IMR-90 (cell line): ENCODE measurements at regions of chr3 and their contacts with region 1.

Region 1: GRCh38 chr3:176814285-176814684 is 383.0 kb downstream of the TBL1XR1 start:
- DNase-seq: peak; percentile 43
- ATAC-seq: peak; percentile 100
- H3K4me3 ChIP-seq: no peak overlapping the region
- H3K27ac ChIP-seq: no peak overlapping the region
- H3K4me1 ChIP-seq: no peaks in the 10 kb centered on the region
- H3K27me3 ChIP-seq: no peaks in the 10 kb centered on the region
- CTCF ChIP-seq: peak; percentile 54
- POLR2A ChIP-seq: no peak
- RAD21 ChIP-seq: peak; percentile 42; the same call in 1 of the 2 replicates

Region 2: GRCh38 chr3:176514297-176514696 is 300.0 kb before region 1 on chr3:
- CTCF ChIA-PET with region 1: no interaction called
- POLR2A ChIA-PET with region 1: no interaction called
- dilution Hi-C with region 1: no loop called
- in situ Hi-C with region 1: no loop called
- intact Hi-C with region 1: loop called (anchors 1 kb)
- DNase-seq: peak; percentile 42
- ATAC-seq: no peak; the same call in 1 of the 2 replicates
- H3K4me3 ChIP-seq: no peak overlapping the region
- H3K27ac ChIP-seq: no peak overlapping the region
- H3K4me1 ChIP-seq: no peaks in the 10 kb centered on the region
- H3K27me3 ChIP-seq: no peaks in the 10 kb centered on the region
- CTCF ChIP-seq: peak; percentile 54
- POLR2A ChIP-seq: no peak
- RAD21 ChIP-seq: peak; percentile 66